ENCODE measurements at regions of chr10 and their contacts with region 1.

Region 1: DNA sequence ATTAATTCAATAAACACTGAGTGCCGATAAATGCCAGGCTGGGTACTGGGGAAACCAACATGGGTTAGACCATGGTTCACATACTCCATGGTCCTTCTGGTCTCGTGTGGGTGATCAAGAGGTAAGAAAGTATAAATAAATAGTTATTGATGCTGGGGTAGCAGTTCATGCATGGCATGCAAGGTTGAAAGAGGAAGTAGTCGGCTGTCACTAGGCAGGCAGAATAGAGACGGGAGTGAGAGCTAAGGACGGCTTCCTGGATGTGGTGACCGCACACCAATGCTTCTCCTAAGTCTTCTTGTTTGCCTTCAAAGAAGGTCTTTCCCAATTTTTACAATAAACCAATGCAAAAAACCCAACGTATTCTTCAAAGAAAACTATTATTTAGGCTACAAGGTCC is 208.6 kb downstream of the ADAM12 start:
- DNase-seq: no peak

Region 2: GRCh38 chr10:126148716-126149424 is 30.8 kb before region 1 on chr10:
- intact Hi-C with region 1: loop called in 1 of 2 experiments (anchors 1 kb)
- DNase-seq: no peak

Region 3: GRCh38 chr10:127245456-127245855 is 1065.8 kb after region 1 on chr10:
- intact Hi-C with region 1: loop called in 1 of 2 experiments (anchors 5 kb)
- DNase-seq: no peak

Measured in posterior vena cava (tissue), 2 donors.